Thyroid gland (tissue), 4 donors: ENCODE measurements at regions of chr11 and their contacts with region 1.

Region 1: GRCh38 chr11:71139516-71140205 is 112.7 kb downstream of the SHANK2 start:
- DNase-seq: peak; percentile 95 to 96
- H3K4me3 ChIP-seq: no peak overlapping the region
- H3K27ac ChIP-seq: peak overlapping the region; percentile 77 to 90 (median 86)
- H3K4me1 ChIP-seq: peaks cover 22% of the 10 kb centered on the region in 2 donors
- H3K27me3 ChIP-seq: no peaks in the 10 kb centered on the region
- CTCF ChIP-seq: no peak
- POLR2A ChIP-seq: no peak

Region 2: DNA sequence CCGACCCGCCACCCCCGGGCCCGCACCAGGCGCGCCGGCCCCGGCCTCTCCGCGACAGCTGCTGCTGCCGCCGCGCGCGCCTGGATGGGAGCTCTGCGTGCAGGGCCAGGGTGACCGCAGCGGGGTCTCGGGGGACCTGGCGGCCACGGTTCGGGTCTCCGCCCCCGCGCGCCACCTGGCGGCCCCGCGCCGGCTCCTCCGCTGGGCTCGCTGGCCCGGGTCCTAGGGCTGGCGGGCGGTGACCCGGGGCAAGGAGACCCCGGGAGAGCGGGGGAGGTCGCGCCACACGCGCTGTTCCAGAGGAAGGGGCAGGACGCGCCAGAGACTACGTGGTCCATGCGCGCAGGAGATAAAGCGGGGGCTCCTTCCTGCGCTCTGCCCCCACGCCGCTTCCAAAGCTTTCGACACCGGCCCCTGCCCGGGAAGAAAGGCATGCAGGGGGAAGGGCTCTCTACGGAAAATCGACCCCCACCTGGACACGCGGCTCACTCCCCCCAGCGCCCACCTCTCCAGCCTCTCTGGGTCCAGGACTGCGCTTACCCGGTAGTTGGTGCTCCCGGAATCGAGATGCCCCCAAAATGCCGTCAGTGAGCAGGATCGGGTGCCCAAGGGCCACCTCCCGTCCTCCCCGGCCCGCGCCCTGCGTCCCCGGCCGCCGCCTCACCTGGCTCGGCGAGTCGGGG is 112.2 kb after region 1 on chr11:
- intact Hi-C with region 1: loop called (anchors 5 kb)
- DNase-seq: peak; percentile 67 to 69
- H3K4me3 ChIP-seq: peak overlapping the region; percentile 18 to 79 (median 56)
- H3K27ac ChIP-seq: peak overlapping the region; percentile 84 to 90 (median 85)
- H3K4me1 ChIP-seq: peaks cover 48 to 56% of the 10 kb centered on the region in 2 donors
- H3K27me3 ChIP-seq: no peaks in the 10 kb centered on the region
- CTCF ChIP-seq: peak; percentile 20 to 76 (median 58)
- POLR2A ChIP-seq: peak in 1 of 2 donors; percentile 35